ENCODE measurements at regions of chr5 and their contacts with region 1.

Region 1: GRCh38 chr5:170100066-170100943 is 5.4 kb upstream of the FOXI1 start:
- H3K4me3 ChIP-seq: no peak overlapping the region
- H3K27ac ChIP-seq: no peak overlapping the region
- H3K4me1 ChIP-seq: no peaks in the 10 kb centered on the region
- CTCF ChIP-seq: peak; percentile 62

Region 2: GRCh38 chr5:170173235-170173634 is 72.9 kb after region 1 on chr5:
- CTCF ChIA-PET with region 1: interaction called, 12 read pairs
- POLR2A ChIA-PET with region 1: no interaction called
- H3K4me3 ChIP-seq: no peak overlapping the region
- H3K27ac ChIP-seq: no peak overlapping the region
- H3K4me1 ChIP-seq: no peaks in the 10 kb centered on the region
- CTCF ChIP-seq: no peak

Region 3: GRCh38 chr5:170216266-170216864 is 116.1 kb after region 1 on chr5:
- CTCF ChIA-PET with region 1: interaction called, 60 read pairs
- POLR2A ChIA-PET with region 1: no interaction called
- H3K4me3 ChIP-seq: no peak overlapping the region
- H3K27ac ChIP-seq: no peak overlapping the region
- H3K4me1 ChIP-seq: no peaks in the 10 kb centered on the region; the same call in 1 of the 2 replicates
- CTCF ChIP-seq: peak; percentile 82

Region 4: GRCh38 chr5:170479484-170479883 is 379.2 kb after region 1 on chr5:
- CTCF ChIA-PET with region 1: no interaction called
- POLR2A ChIA-PET with region 1: no interaction called
- H3K4me3 ChIP-seq: no peak overlapping the region
- H3K27ac ChIP-seq: no peak overlapping the region
- H3K4me1 ChIP-seq: no peaks in the 10 kb centered on the region; the same call in 1 of the 2 replicates
- CTCF ChIP-seq: no peak